Head of caudate nucleus (tissue), 42 donors: ENCODE measurements at regions of chr13 and their contacts with region 1.

Region 1: DNA sequence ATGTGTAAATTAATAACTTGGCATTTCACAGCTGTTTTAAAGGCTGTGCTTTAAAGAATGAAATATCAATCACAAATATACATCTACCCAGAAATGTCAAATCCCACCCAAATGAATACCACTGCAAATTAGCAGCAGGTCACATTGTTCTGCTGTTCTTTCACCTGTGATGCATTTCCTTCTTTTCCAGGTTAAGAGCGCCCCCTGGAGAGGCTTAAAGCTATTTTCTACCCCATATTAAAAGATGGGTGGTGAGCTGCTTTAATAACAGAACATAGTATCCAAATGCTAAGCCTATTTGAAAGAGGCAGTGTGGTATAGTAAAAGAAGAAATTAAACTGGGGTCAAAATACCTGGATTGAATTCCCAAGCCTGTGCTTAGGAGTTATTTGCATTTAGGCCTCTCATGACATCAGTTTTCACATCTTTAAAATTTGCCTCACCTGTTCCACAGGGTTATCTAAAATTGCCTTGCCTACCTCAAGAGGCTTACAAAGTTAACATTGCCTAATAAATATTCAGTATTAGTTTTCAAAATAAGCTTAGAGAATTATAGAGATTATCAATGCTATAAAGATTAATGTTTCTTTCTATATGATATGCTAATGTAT is 396.9 kb upstream of the SLITRK5 start:
- DNase-seq: peak in 25 of 42 donors; percentile 14 to 79 (median 55)

Region 2: GRCh38 chr13:87669379-87670125 is 395.2 kb after region 1 on chr13:
- intact Hi-C with region 1: loop called (anchors 10 kb)
- DNase-seq: peak in 17 of 42 donors; percentile 16 to 76 (median 46)